HCT116 (cell line): ENCODE measurements at regions of chrX and their contacts with region 1.

Region 1: DNA sequence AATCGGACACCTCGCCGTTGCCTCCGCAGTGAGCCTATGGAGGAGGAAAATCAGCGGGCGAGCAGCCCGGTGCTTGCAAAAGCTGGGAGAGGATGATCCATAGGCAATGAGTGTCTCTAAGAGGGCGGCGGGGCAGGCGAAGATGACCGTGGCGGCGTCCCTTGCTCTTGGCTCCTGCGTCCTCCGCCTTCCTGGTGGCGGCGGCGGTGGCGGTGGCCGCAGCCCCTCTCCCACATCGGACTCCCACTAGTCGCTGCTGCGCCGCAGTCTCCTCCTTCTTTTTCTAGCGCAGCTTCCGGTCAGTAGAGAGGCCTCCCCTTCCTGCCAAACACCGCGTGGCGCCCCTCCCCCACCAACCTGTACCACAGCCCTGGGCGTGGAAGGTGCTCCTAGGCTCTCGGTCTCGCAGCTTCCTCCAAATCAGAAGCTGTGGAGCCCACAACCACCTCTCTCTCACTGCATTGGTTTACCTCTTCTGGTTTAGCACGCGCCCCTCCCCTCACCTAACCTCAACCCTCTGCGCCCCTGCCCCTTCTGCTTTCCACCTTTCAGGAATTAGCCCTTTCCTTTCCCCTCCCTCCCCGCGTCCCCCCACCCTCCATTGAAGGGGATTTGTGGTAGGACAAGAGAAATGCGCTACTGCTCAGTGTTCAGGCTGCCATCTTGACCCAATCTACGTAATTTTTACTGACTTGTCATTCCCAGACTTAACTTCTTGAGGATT is at the start of gene SPIN3:
- DNase-seq: peak; percentile 73
- ATAC-seq: peak; percentile 99
- H3K4me3 ChIP-seq: peak within 1 kb of the TSS; percentile 59 to 80
- H3K27ac ChIP-seq: peak within 1 kb of the TSS; percentile 67
- H3K4me1 ChIP-seq: peaks cover 0 to 16% of the 10 kb centered on the region in 2 experiments; a peak in 3 of 4 replicates
- H3K27me3 ChIP-seq: no peaks in the 10 kb centered on the region
- CTCF ChIP-seq: no peak
- POLR2A ChIP-seq: peak; percentile 61
- RAD21 ChIP-seq: no peak
- total RNA-seq, gene SPIN3: 13.8 TPM

Region 2: GRCh38 chrX:56920338-56920997 is 75.0 kb before region 1 on chrX:
- CTCF ChIA-PET with region 1: no interaction called
- POLR2A ChIA-PET with region 1: no interaction called
- RAD21 ChIA-PET with region 1: no interaction called
- intact Hi-C with region 1: no loop called
- DNase-seq: no peak
- ATAC-seq: no peak
- H3K4me3 ChIP-seq: no peak overlapping the region
- H3K27ac ChIP-seq: no peak overlapping the region
- H3K4me1 ChIP-seq: no peaks in the 10 kb centered on the region
- H3K27me3 ChIP-seq: no peaks in the 10 kb centered on the region
- CTCF ChIP-seq: no peak
- POLR2A ChIP-seq: no peak
- RAD21 ChIP-seq: no peak

Region 3: GRCh38 chrX:56947695-56948094 is 47.7 kb before region 1 on chrX:
- CTCF ChIA-PET with region 1: no interaction called
- POLR2A ChIA-PET with region 1: no interaction called
- RAD21 ChIA-PET with region 1: no interaction called
- intact Hi-C with region 1: loop called (anchors 2 kb)
- DNase-seq: no peak
- ATAC-seq: peak; percentile 34; the same call in 1 of the 2 replicates
- H3K4me3 ChIP-seq: no peak overlapping the region
- H3K27ac ChIP-seq: peak overlapping the region; percentile 45; the same call in 1 of the 2 replicates
- H3K4me1 ChIP-seq: peaks cover 15 to 34% of the 10 kb centered on the region in 2 experiments
- H3K27me3 ChIP-seq: no peaks in the 10 kb centered on the region
- CTCF ChIP-seq: no peak
- POLR2A ChIP-seq: no peak
- RAD21 ChIP-seq: no peak

Region 4: DNA sequence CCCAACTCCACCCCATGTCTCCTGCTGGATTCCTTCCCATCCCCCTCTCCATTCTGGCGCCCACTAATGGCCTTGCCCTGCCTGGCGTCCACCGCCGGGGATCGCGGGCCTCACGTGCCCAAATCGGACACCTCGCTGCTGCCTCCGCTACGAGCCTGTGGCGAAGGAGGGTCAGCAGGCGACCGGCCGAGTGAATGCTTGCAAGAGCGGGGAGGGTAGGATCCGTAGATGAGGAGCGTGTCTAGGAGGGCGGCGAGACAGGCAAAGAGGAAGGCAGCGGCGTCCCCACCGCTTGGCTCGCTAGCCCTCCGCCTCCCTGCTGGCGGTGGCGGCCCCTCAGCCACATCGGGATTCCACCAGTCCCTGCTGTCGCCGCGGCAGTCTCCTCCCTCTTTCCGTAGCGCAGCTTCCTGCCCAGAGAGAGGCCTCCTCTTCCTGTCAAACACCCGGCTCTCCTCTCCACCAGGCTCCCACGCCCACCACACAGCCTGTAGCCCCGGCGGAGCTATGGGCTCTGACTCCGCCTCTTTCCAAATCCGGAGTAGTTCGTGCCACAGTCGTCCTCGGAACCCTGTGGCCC is 125.8 kb after region 1 on chrX and contains the start of gene SPIN2B:
- CTCF ChIA-PET with region 1: no interaction called
- POLR2A ChIA-PET with region 1: no interaction called
- RAD21 ChIA-PET with region 1: no interaction called
- intact Hi-C with region 1: loop called (anchors 5 kb)
- DNase-seq: peak; percentile 60
- ATAC-seq: peak; percentile 100
- H3K4me3 ChIP-seq: peak within 1 kb of the TSS; percentile 57 to 63
- H3K27ac ChIP-seq: peak within 1 kb of the TSS; percentile 58; the same call in 1 of the 2 replicates
- H3K4me1 ChIP-seq: no peaks in the 10 kb centered on the region
- H3K27me3 ChIP-seq: no peaks in the 10 kb centered on the region
- CTCF ChIP-seq: no peak
- POLR2A ChIP-seq: peak; percentile 48
- RAD21 ChIP-seq: no peak
- total RNA-seq, gene SPIN2B: 9.3 TPM